Breast epithelium (tissue), 4 donors: ENCODE measurements at regions of chr2 and their contacts with region 1.

Region 1: GRCh38 chr2:7007846-7008741 is 90.9 kb downstream of the RNF144A start:
- DNase-seq: peak; percentile 76 to 83
- H3K4me3 ChIP-seq: peak overlapping the region in 2 of 3 donors; percentile 24 to 49
- H3K27ac ChIP-seq: peak overlapping the region; percentile 70 to 86
- H3K4me1 ChIP-seq: peaks cover 8 to 12% of the 10 kb centered on the region in 2 donors
- H3K27me3 ChIP-seq: no peaks in the 10 kb centered on the region
- CTCF ChIP-seq: peak in 2 of 3 donors; percentile 36 to 46
- POLR2A ChIP-seq: no peak

Region 2: DNA sequence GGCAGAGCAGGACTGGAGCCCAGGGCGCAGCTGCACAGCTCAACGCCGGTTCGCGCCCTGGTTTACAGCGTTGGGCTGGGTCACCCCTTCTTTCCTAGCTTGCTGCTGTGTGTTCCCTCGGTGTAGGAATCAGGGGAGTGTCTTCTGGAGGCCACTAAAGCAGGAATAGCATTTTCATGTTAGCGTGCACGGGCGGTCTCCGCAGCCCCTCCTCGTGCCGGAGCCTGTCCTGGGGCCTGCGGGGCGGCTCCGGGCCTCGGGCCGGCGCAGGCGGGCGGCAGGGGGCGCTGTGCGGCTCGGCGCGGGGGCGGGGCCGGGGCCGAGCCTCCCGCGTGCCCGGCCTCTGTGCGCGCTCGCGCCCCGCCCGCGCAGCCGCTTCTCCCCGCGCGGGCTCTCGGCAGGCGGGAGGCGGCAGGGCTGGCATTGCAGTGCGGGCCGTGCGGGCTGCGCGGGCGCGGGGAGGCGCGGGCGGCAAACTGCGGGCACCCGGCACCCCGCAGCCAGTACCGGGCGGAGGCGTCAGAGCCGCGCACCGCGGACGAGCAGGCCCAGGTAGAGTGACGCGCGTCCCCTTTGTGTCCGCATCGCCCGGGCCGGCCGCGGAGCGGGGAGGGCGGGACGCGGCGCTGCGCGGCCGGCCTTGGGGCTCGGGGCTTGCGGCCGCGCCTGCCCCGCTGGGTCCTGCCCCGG is 90.9 kb before region 1 on chr2 and contains the start of gene RNF144A:
- intact Hi-C with region 1: loop called (anchors 10 kb)
- DNase-seq: no peak
- H3K4me3 ChIP-seq: peak within 1 kb of the TSS; percentile 70 to 96 (median 79)
- H3K27ac ChIP-seq: peak within 1 kb of the TSS; percentile 64 to 69
- H3K4me1 ChIP-seq: no peaks in the 10 kb centered on the region
- H3K27me3 ChIP-seq: no peaks in the 10 kb centered on the region
- CTCF ChIP-seq: peak in 2 of 3 donors; percentile 22 to 45
- POLR2A ChIP-seq: no peak
- total RNA-seq, gene RNF144A: 10.8 to 17.1 (median 11.6) TPM

Region 3: DNA sequence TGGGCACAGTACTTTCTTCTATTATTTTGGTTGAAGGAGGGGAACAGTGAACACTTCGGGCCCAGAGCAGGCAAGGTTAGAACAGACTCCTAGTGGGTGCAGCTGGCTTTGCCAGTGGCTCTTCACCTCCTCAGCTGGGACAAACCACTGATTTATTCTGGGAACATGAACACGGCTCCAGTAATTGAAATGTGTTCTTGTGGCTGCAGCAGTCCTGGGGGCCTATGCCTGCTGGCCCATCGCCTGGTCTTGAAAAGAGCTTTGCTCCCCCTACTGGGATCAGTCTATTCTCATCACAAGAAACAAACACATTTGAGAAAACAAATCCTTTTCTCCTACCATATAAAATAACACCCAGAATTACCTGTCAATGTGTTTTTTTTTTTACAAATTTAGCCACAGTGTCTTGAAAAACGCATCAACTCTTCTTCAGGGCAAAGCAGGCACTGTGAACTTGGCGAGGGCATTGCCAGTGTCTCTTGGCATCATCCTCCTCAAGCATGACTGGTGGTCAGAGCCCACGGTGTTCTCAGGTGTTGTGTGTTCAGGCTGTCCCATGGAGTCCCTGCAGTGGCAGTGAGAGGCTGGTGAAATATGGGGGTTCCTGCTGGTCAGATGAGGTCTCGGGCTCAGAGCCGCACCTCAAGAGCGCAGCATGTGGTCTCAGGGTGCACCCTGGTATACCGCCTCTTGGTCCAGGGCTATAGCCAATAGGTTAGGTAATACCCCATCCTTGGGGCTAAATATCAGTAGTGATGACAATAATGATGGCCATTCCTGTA is 39.6 kb before region 1 on chr2:
- intact Hi-C with region 1: no loop called
- DNase-seq: no peak
- H3K4me3 ChIP-seq: no peak overlapping the region
- H3K27ac ChIP-seq: no peak overlapping the region
- H3K4me1 ChIP-seq: no peaks in the 10 kb centered on the region
- H3K27me3 ChIP-seq: no peaks in the 10 kb centered on the region
- CTCF ChIP-seq: no peak
- POLR2A ChIP-seq: no peak

Region 4: DNA sequence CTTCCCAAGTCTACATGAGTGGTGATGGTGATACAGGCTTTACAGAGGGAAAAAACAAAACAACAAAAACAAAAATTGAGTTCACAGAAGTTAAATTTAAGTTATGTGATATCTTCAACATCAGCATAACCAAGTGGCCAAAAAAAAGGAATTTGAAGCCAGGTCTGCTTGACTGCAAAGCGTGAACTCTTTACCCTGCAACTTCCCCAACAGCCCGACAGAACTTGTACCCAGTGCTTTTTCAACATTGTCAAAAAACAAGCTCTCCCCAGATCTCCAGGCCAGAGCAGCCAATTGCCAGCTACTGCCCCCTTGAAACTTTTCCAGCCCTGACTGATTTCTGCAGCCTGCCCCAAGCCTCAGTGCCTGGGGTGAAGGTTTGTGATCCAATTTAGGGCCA is 14.2 kb before region 1 on chr2:
- intact Hi-C with region 1: loop called (anchors 1 kb)
- DNase-seq: no peak
- H3K4me3 ChIP-seq: no peak overlapping the region
- H3K27ac ChIP-seq: peak overlapping the region in 1 of 2 donors; percentile 13
- H3K4me1 ChIP-seq: no peaks in the 10 kb centered on the region
- H3K27me3 ChIP-seq: no peaks in the 10 kb centered on the region
- CTCF ChIP-seq: no peak
- POLR2A ChIP-seq: no peak